H1 (cell line): ENCODE measurements at regions of chr4 and their contacts with region 1.

Region 1: DNA sequence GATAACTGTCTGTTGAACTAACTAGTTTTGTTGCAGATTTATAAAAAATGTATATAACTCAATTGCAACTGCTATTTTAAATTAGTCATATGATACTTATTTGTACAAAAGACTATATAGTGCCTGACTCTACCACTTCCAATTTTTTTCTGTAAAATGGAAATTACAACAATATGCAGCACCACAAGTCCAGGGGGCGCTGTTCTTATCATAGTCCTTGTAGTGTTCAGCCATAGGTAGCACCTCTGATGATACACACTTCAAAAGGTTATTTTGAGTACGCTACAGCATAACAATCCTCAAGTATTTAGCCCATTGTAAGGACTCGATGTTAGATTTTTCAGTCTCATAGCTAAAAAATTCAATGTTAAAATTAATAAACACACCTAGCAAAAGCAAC is 174.9 kb downstream of the CORIN start:
- DNase-seq: no peak
- H3K4me3 ChIP-seq: no peak overlapping the region
- H3K27ac ChIP-seq: no peak overlapping the region
- H3K4me1 ChIP-seq: no peaks in the 10 kb centered on the region
- H3K27me3 ChIP-seq: no peaks in the 10 kb centered on the region
- CTCF ChIP-seq: peak in 2 of 3 experiments; percentile 38 to 55; a peak in 3 of 4 replicates
- EP300 ChIP-seq: no peak
- POLR2A ChIP-seq: no peak
- RAD21 ChIP-seq: no peak

Region 2: DNA sequence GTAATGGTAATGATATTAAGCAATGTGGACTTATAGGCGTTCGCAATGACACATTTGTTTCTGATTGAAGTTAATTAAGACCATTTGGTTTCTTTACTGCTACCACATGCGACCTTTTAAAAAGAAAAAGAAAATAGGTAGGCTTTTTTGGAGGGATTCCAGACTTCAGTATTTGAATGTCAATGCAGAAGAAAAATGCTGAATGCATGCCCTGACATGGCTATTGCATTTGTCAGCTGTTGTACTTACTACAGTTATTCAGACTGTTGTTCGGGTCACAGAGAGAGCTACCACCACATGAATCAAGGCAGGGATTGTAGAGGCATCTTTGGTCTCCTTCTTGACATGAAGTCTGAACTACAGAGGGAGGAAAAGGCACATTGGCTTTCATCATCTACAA is 11.2 kb after region 1 on chr4:
- CTCF ChIA-PET with region 1: interaction called, 10 read pairs
- POLR2A ChIA-PET with region 1: no interaction called
- DNase-seq: no peak
- H3K4me3 ChIP-seq: no peak overlapping the region
- H3K27ac ChIP-seq: no peak overlapping the region
- H3K4me1 ChIP-seq: no peaks in the 10 kb centered on the region
- H3K27me3 ChIP-seq: no peaks in the 10 kb centered on the region
- CTCF ChIP-seq: no peak
- EP300 ChIP-seq: no peak
- POLR2A ChIP-seq: no peak
- RAD21 ChIP-seq: no peak

Region 3: DNA sequence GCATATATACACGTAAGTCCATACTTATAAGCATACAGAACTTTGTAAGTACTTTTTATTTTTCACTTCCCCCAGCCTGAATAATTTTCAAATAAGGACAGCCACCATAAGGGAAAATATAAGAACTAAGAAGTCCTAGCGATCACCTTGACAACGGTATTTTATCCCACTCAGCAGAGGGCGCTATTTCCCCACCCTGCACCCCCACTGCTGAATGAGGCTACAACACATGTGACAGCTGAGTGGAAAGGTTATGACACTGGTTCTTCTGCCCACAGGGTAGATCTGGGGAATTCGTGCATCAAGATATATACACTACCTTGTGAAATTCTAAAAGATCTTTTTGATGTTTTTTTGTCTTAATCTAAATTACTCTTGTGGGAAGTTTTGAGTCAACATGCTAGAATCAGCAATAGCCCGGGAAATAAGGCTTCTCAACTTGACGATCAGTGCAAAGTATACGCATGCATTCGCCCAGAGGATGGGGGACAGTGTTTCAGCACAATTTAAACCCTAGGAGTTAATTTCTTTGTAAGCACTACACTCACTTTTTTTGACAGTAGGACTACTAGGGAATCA is 23.4 kb after region 1 on chr4:
- CTCF ChIA-PET with region 1: interaction called, 12 read pairs
- POLR2A ChIA-PET with region 1: no interaction called
- DNase-seq: peak; percentile 19 to 82
- H3K4me3 ChIP-seq: no peak overlapping the region
- H3K27ac ChIP-seq: no peak overlapping the region
- H3K4me1 ChIP-seq: no peaks in the 10 kb centered on the region
- H3K27me3 ChIP-seq: no peaks in the 10 kb centered on the region
- CTCF ChIP-seq: peak; percentile 83 to 84 (median 84)
- EP300 ChIP-seq: no peak
- POLR2A ChIP-seq: no peak
- RAD21 ChIP-seq: peak; percentile 84 to 87